Spleen (tissue), 13 donors: ENCODE measurements at regions of chr18 and their contacts with region 1.

Region 1: GRCh38 chr18:62522504-62523254 is at the start of gene ZCCHC2:
- DNase-seq: peak; percentile 99
- H3K4me3 ChIP-seq: peak within 1 kb of the TSS; percentile 63 to 94 (median 84)
- H3K27ac ChIP-seq: peak within 1 kb of the TSS; percentile 95 to 99 (median 98)
- H3K4me1 ChIP-seq: peaks cover 18 to 50% (median 36%) of the 10 kb centered on the region in 6 donors
- H3K27me3 ChIP-seq: no peaks in the 10 kb centered on the region
- CTCF ChIP-seq: peak in 4 of 11 experiments; percentile 6 to 38 (median 24)
- POLR2A ChIP-seq: peak in 1 of 3 donors; percentile 66
- total RNA-seq, gene ZCCHC2: 27.5 to 55.7 (median 40.9) TPM

Region 2: GRCh38 chr18:62186774-62187542 is 335.7 kb before region 1 on chr18 and contains the starts of genes PIGN and RELCH:
- intact Hi-C with region 1: loop called (anchors 10 kb)
- DNase-seq: peak; percentile 97
- H3K4me3 ChIP-seq: peak within 1 kb of the TSS; percentile 91 to 100 (median 99)
- H3K27ac ChIP-seq: peak within 1 kb of the TSS; percentile 65 to 91 (median 88)
- H3K4me1 ChIP-seq: peaks cover 33 to 85% (median 57%) of the 10 kb centered on the region in 6 donors
- H3K27me3 ChIP-seq: no peaks in the 10 kb centered on the region
- CTCF ChIP-seq: peak in 3 of 11 experiments; percentile 25 to 37 (median 33)
- POLR2A ChIP-seq: peak in 2 of 3 donors; percentile 66 to 76
- total RNA-seq, gene PIGN: 21.5 to 41.4 (median 33.8) TPM
- total RNA-seq, gene RELCH: 38.3 to 75.1 (median 52.5) TPM

Region 3: DNA sequence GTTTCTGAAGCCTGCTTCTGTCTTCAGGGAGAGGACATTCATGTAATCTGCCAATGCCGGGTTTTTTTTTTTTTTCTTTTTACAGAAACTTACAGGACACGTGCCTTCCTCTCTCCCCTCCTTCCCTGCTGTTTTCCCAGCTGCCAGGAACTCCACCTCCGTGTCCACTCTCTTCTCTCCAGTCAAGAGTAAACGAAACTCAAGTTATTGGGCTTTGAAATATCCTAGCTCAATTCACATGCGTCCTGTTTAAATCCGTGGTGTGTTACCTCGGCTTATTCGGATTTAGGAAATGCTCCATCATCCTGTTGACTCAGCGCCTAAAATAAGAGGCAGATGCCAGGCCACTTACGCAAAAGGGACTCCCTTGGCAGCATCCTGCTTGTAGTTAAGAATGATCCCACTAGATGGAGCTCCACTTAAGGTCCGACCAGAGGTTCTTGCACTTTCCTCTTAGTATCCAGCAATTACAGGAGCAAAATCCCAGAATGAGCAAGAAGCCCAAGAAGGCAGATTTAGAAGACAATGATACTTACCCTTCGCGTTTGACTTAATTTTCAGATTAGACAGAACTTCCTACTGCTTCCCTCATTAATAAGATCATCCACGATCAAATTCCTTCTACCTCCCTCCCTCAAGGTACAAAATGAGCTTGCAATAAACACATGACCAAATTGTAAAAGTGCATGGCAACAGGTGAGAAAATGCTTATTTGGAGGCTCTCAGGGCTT is 97.0 kb before region 1 on chr18:
- intact Hi-C with region 1: loop called (anchors 5 kb)
- DNase-seq: no peak
- H3K4me3 ChIP-seq: peak overlapping the region in 2 of 8 donors; percentile 15 to 44
- H3K27ac ChIP-seq: peak overlapping the region; percentile 22 to 82 (median 77)
- H3K4me1 ChIP-seq: peaks cover 0 to 38% (median 20%) of the 10 kb centered on the region in 6 donors
- H3K27me3 ChIP-seq: no peaks in the 10 kb centered on the region
- CTCF ChIP-seq: peak; percentile 72 to 94 (median 86)
- POLR2A ChIP-seq: no peak